CD4-positive, alpha-beta T cell (primary cell): ENCODE measurements at regions of chr6 and their contacts with region 1.

Region 1: GRCh38 chr6:139508023-139508422 is 133.6 kb upstream of the CITED2 start:
- DNase-seq: no peak
- ATAC-seq: no peak
- H3K4me3 ChIP-seq: no peak overlapping the region
- H3K4me3 Mint-ChIP-seq: no peak overlapping the region
- H3K27ac ChIP-seq: no peak overlapping the region
- H3K27ac Mint-ChIP-seq: no peak overlapping the region
- H3K4me1 ChIP-seq: no peaks in the 10 kb centered on the region
- H3K4me1 Mint-ChIP-seq: no peaks in the 10 kb centered on the region
- H3K27me3 ChIP-seq: no peaks in the 10 kb centered on the region
- H3K27me3 Mint-ChIP-seq: no peaks in the 10 kb centered on the region
- CTCF ChIP-seq: no peak

Region 2: DNA sequence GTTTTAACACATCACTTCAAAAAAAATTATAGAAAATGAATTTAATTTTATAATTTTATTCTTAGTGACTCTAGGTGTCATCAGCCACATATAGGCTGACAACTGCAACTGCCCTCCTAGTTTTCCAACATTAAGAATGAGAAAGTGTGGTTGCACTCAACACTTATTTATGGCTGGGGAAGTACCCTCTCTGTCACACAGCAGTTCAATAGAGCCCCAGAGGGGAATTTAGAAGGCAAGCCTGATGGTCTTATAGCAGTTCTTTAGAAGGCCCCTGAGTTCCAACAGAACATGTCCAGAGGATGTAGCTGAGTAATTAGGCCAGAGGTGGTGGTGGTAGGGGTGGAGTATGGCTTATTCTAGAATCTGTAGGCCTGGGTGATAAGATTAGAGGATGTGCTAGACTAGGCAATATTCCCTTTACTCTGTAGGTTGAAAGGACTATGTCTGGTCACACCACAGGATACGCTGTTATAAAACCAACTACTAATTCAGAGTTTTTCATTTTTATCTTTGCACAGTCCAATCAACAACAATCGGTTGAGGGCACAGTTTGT is 93.0 kb after region 1 on chr6:
- CTCF ChIA-PET with region 1: no interaction called
- POLR2A ChIA-PET with region 1: no interaction called
- intact Hi-C with region 1: loop called in 1 of 2 experiments (anchors 10 kb)
- DNase-seq: no peak
- ATAC-seq: no peak
- H3K4me3 ChIP-seq: no peak overlapping the region
- H3K4me3 Mint-ChIP-seq: no peak overlapping the region
- H3K27ac ChIP-seq: no peak overlapping the region
- H3K27ac Mint-ChIP-seq: no peak overlapping the region
- H3K4me1 ChIP-seq: no peaks in the 10 kb centered on the region
- H3K4me1 Mint-ChIP-seq: no peaks in the 10 kb centered on the region
- H3K27me3 ChIP-seq: no peaks in the 10 kb centered on the region
- H3K27me3 Mint-ChIP-seq: peaks cover 6% of the 10 kb centered on the region
- CTCF ChIP-seq: no peak